ENCODE measurements at regions of chr16 and their contacts with region 1.

Region 1: GRCh38 chr16:23949630-23950290 is 114.0 kb downstream of the PRKCB start:
- DNase-seq: no peak
- ATAC-seq: no peak
- H3K4me3 ChIP-seq: no peak overlapping the region
- H3K27ac ChIP-seq: no peak overlapping the region
- H3K4me1 ChIP-seq: no peaks in the 10 kb centered on the region
- H3K27me3 ChIP-seq: peaks cover 0 to 12% of the 10 kb centered on the region in 2 experiments; a peak in 2 of 5 replicates
- CTCF ChIP-seq: no peak
- EP300 ChIP-seq: no peak
- POLR2A ChIP-seq: no peak
- RAD21 ChIP-seq: no peak

Region 2: GRCh38 chr16:23874613-23875294 is 75.0 kb before region 1 on chr16:
- CTCF ChIA-PET with region 1: no interaction called
- POLR2A ChIA-PET with region 1: no interaction called
- in situ Hi-C with region 1: no loop called
- intact Hi-C with region 1: no loop called
- DNase-seq: no peak
- ATAC-seq: no peak
- H3K4me3 ChIP-seq: no peak overlapping the region
- H3K27ac ChIP-seq: no peak overlapping the region
- H3K4me1 ChIP-seq: no peaks in the 10 kb centered on the region
- H3K27me3 ChIP-seq: peaks cover 2 to 21% of the 10 kb centered on the region in 2 experiments; a peak in 3 of 5 replicates
- CTCF ChIP-seq: no peak
- EP300 ChIP-seq: no peak
- POLR2A ChIP-seq: no peak
- RAD21 ChIP-seq: no peak

Region 3: DNA sequence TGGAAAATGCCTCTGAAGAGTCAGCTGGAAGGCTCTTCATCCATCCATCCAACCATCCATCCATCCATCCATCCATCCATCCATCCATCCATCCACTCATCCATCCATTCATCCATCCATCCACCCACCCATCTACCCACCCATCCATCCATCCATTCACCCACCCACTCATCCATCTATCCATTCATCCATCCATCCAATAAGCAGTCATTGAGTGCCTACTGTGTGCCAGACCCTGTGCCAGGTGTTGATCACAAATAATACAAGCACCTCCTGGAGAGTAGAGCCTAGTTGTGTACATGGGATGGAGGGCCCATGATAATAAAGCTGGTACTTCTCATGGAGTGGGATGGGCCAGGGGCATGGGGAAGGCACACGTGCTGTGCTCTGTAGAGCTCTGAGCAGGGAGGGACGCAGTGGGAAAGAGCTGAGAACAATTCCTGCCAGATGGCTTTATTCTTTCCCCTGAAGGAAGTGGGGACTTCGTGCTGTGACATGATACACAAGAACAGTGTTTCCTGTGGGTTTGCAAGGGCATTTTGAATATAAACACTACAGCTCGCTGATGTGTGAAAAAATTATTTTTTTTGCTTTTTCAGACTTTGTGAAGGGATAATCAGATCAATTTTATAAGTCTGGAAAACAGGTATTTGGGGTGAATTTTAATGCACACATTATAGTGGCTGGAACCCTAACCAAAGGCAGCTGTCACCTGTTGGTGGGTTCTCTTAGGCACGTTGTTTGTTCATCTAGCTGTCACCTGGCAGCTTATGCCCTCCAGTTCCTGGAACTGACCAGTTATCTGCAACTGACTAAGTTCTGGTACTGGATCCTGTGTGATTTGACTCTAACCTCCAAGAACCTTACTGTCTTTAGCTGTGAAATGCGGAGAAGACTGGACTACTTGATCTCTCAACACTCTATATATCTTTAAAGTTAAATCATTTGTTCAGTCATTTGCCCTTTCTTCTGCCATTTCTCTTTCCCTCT is 52.6 kb before region 1 on chr16:
- CTCF ChIA-PET with region 1: no interaction called
- POLR2A ChIA-PET with region 1: no interaction called
- in situ Hi-C with region 1: loop called (anchors 5 kb)
- intact Hi-C with region 1: no loop called
- DNase-seq: no peak
- ATAC-seq: no peak
- H3K4me3 ChIP-seq: no peak overlapping the region
- H3K27ac ChIP-seq: no peak overlapping the region
- H3K4me1 ChIP-seq: no peaks in the 10 kb centered on the region
- H3K27me3 ChIP-seq: peaks cover 0 to 5% of the 10 kb centered on the region in 2 experiments; a peak in 1 of 5 replicates
- CTCF ChIP-seq: no peak
- EP300 ChIP-seq: no peak
- POLR2A ChIP-seq: no peak
- RAD21 ChIP-seq: no peak

Region 4: GRCh38 chr16:23902748-23903414 is 46.9 kb before region 1 on chr16:
- CTCF ChIA-PET with region 1: no interaction called
- POLR2A ChIA-PET with region 1: no interaction called
- in situ Hi-C with region 1: loop called (anchors 5 kb)
- intact Hi-C with region 1: loop called (anchors 1 kb)
- DNase-seq: no peak
- ATAC-seq: no peak
- H3K4me3 ChIP-seq: no peak overlapping the region
- H3K27ac ChIP-seq: no peak overlapping the region
- H3K4me1 ChIP-seq: no peaks in the 10 kb centered on the region
- H3K27me3 ChIP-seq: peaks cover 2 to 17% of the 10 kb centered on the region in 2 experiments; a peak in 1 of 5 replicates
- CTCF ChIP-seq: no peak
- EP300 ChIP-seq: no peak
- POLR2A ChIP-seq: no peak
- RAD21 ChIP-seq: no peak